ENCODE measurements at regions of chr22 and their contacts with region 1.

Region 1: GRCh38 chr22:20488946-20489345 is 6.6 kb downstream of the KLHL22 start:
- DNase-seq: no peak
- ATAC-seq: no peak
- H3K4me3 Mint-ChIP-seq: no peak overlapping the region
- H3K27ac Mint-ChIP-seq: no peak overlapping the region
- H3K4me1 Mint-ChIP-seq: peaks cover 24% of the 10 kb centered on the region
- H3K27me3 Mint-ChIP-seq: no peaks in the 10 kb centered on the region
- CTCF ChIP-seq: no peak

Region 2: GRCh38 chr22:20463324-20464095 is 25.4 kb before region 1 on chr22:
- CTCF ChIA-PET with region 1: no interaction called
- POLR2A ChIA-PET with region 1: interaction called, 13 read pairs
- intact Hi-C with region 1: no loop called
- DNase-seq: peak; percentile 29
- ATAC-seq: peak; percentile 76
- H3K4me3 Mint-ChIP-seq: peak overlapping the region; percentile 49
- H3K27ac Mint-ChIP-seq: peak overlapping the region; percentile 99
- H3K4me1 Mint-ChIP-seq: peaks cover 47% of the 10 kb centered on the region
- H3K27me3 Mint-ChIP-seq: no peaks in the 10 kb centered on the region
- CTCF ChIP-seq: no peak

Region 3: DNA sequence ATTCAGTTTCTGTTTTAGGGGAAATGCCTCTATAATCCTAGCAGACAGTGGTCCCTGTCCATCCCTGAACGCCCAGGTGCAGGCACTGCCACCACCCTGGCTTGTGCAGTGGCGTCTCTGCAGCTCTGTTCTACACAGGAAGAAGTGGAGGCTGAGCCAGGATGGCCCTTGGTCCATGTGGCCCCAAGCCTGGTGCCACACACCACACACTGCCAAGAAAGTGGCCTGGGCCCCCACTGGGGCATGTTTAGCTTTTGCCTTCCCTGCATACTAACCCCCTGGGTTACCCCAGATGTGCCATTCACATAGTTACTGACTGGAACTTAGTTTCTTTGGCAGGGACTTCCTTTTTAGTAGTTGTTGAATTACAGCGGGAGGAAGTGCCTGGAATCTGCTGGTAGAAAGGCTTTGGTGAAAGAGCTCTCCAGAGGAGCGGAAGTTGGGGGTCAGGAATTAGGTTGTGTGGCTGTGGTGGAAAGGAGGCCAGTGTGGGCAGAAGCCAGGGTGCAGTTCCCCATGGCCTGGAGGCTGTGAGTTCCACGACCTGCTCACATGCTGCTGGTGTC is 87.4 kb after region 1 on chr22:
- CTCF ChIA-PET with region 1: no interaction called
- POLR2A ChIA-PET with region 1: no interaction called
- intact Hi-C with region 1: no loop called
- DNase-seq: no peak
- ATAC-seq: no peak
- H3K4me3 Mint-ChIP-seq: no peak overlapping the region
- H3K27ac Mint-ChIP-seq: no peak overlapping the region
- H3K4me1 Mint-ChIP-seq: no peaks in the 10 kb centered on the region
- H3K27me3 Mint-ChIP-seq: no peaks in the 10 kb centered on the region
- CTCF ChIP-seq: no peak

Measured in activated B cell treated with CpG ODN at 0.5 μM for 24 hours (primary cell).